ENCODE measurements at regions of chr11 and their contacts with region 1.

Region 1: DNA sequence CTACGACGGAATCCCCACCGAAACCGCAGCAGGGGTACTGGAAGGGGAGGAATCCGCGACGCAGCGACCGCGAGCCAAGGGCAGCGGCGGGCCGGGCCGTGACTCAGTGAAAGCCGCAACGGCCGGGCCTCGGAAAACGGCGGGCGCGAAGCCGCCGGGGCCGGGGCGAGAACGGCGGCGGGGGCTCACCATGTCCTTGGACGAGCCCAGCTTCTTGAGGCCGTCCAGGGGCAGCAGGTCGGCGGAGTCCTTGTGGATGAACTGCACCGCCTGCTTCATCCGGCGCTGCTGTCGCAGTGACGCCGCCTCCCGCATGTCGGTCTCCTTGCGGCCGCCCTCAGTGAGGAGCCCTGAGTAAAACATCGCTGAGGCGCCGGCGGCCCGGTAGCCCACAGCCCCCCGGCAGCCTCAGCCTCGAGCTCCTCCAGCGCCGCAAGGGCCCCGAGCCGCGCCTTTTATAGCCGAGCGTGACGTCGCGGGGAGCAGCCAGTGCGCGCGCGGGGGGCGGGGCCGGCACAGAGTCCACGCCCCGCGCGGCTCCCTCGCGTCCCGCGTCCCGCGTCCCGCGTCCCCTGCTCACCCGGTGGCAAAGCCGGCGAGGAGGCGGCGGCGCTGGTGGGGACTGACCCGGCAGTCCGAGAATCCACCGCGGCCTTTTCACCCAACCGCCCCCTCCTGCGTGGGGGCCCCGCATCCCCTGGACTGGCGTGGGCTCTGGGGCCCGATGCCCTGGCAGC is at the start of gene NRIP3:
- DNase-seq: peak; percentile 55 to 76
- H3K4me3 ChIP-seq: peak within 1 kb of the TSS; percentile 39 to 72 (median 56)
- H3K27ac ChIP-seq: peak within 1 kb of the TSS in 1 of 2 donors; percentile 20
- H3K4me1 ChIP-seq: no peaks in the 10 kb centered on the region
- H3K27me3 ChIP-seq: peaks cover 0 to 13% of the 10 kb centered on the region in 2 donors
- CTCF ChIP-seq: no peak
- POLR2A ChIP-seq: no peak
- total RNA-seq, gene NRIP3: 0.96 to 14.5 (median 3.6) TPM

Region 2: DNA sequence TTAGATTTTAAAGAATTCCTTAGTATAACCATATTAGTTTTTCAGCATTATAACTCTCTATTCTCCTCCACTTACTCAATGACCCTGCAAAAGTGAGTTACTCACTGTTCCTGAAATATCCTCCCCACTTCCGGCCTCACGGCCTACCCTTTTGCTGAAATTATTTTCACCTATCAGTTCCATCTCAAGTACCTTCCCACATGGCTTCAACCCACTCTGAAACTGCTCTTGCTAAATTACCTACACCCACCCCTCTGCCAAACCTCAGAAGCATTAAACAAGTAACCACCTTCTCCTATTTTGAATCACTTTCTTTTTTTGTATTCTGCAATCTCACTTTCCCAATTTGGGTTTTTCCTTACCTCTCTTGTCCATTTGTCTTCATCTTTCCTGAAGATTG is 1244.7 kb before region 1 on chr11:
- intact Hi-C with region 1: loop called (anchors 10 kb)
- DNase-seq: no peak
- H3K4me3 ChIP-seq: no peak overlapping the region
- H3K27ac ChIP-seq: no peak overlapping the region
- H3K4me1 ChIP-seq: no peaks in the 10 kb centered on the region
- H3K27me3 ChIP-seq: no peaks in the 10 kb centered on the region
- CTCF ChIP-seq: no peak
- POLR2A ChIP-seq: no peak

Measured in breast epithelium (tissue), 4 donors.